Spleen (tissue), 13 donors: ENCODE measurements at regions of chr7 and their contacts with region 1.

Region 1: DNA sequence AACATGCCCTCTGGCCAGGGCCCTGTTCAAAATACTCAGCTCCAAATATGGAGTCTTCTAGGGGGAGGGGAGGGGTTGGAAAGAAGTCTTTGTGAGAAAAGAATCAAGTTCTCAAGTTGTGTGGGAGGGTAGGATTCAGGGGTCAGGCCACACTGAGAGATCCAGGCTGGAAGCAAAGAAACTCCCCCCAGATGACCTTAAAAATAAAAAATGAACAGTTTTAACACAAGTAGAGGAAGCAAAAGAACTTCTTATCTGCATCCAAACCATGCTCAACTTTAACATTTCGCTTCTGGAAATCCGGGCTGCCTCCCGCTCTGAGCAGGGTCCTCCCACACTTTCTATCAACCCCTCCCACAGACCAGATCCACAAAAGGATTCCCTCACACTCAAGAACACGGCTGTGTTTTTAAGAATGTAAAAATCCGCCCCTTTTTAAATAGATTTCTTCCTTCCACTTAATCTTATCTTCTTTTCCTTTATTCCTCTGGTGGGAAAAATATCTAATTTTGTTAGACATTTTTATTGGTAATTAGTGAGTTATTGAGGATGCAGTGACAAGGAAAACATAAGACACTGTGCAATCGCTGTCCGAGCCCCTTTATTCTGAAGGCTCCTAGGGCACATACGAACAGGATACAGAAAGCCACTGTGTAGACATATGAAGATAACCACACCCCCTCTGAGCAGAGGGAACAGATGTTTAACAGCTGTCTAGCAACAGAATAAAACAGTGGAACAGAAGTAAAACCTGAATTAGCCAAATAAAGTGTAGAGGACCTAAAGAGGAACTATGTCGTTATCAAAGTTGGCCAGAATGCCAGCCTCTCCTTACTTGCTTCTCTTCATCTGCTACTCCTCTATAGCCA is 43.8 kb downstream of the CYTH3 start:
- DNase-seq: no peak
- H3K4me3 ChIP-seq: peak overlapping the region in 2 of 8 donors; percentile 2 to 27
- H3K27ac ChIP-seq: peak overlapping the region in 6 of 8 donors; percentile 34 to 70 (median 60)
- H3K4me1 ChIP-seq: peaks cover 7 to 80% (median 43%) of the 10 kb centered on the region in 6 donors
- H3K27me3 ChIP-seq: no peaks in the 10 kb centered on the region
- CTCF ChIP-seq: no peak
- POLR2A ChIP-seq: no peak

Region 2: GRCh38 chr7:6175645-6176044 is 53.0 kb before region 1 on chr7:
- intact Hi-C with region 1: loop called (anchors 10 kb)
- DNase-seq: no peak
- H3K4me3 ChIP-seq: no peak overlapping the region
- H3K27ac ChIP-seq: no peak overlapping the region
- H3K4me1 ChIP-seq: peaks cover 3 to 53% (median 21%) of the 10 kb centered on the region in 6 donors
- H3K27me3 ChIP-seq: no peaks in the 10 kb centered on the region
- CTCF ChIP-seq: no peak
- POLR2A ChIP-seq: no peak